Activated CD4-positive, alpha-beta memory T cell treated with anti-CD3 and anti-CD28 coated beads, Interleukin-2, amount 10 ng/mL, durations not matched to agents 7 days and 5 days (primary cell): ENCODE measurements at regions of chr5 and their contacts with region 1.

Region 1: GRCh38 chr5:119315516-119315949 is 40.3 kb upstream of the TNFAIP8 start:
- DNase-seq: peak; percentile 63
- H3K4me3 Mint-ChIP-seq: peak overlapping the region; percentile 21
- H3K27ac Mint-ChIP-seq: peak overlapping the region; percentile 77
- H3K4me1 Mint-ChIP-seq: peaks cover 94% of the 10 kb centered on the region
- H3K27me3 Mint-ChIP-seq: no peaks in the 10 kb centered on the region

Region 2: DNA sequence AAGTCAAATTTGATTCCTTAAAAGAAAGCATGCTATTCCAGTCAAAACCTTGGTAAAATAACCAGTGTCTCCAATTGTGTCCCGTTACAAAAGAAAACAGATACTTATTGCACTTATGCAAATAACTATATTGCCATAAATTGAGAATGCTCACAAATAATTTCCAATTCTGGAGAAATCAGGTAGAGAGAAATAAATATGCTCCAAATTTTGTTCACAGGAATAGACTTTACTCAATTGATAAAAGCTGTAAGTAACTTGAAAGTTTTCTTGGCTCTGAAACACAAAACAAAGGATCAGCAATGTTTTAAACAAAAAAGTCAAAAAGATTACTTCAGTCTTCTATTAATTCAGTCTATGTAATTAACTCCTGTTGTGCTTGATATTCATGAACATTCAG is 319.4 kb before region 1 on chr5:
- CTCF ChIA-PET with region 1: no interaction called
- POLR2A ChIA-PET with region 1: no interaction called
- DNase-seq: no peak
- H3K4me3 Mint-ChIP-seq: no peak overlapping the region
- H3K27ac Mint-ChIP-seq: no peak overlapping the region
- H3K4me1 Mint-ChIP-seq: no peaks in the 10 kb centered on the region
- H3K27me3 Mint-ChIP-seq: no peaks in the 10 kb centered on the region

Region 3: DNA sequence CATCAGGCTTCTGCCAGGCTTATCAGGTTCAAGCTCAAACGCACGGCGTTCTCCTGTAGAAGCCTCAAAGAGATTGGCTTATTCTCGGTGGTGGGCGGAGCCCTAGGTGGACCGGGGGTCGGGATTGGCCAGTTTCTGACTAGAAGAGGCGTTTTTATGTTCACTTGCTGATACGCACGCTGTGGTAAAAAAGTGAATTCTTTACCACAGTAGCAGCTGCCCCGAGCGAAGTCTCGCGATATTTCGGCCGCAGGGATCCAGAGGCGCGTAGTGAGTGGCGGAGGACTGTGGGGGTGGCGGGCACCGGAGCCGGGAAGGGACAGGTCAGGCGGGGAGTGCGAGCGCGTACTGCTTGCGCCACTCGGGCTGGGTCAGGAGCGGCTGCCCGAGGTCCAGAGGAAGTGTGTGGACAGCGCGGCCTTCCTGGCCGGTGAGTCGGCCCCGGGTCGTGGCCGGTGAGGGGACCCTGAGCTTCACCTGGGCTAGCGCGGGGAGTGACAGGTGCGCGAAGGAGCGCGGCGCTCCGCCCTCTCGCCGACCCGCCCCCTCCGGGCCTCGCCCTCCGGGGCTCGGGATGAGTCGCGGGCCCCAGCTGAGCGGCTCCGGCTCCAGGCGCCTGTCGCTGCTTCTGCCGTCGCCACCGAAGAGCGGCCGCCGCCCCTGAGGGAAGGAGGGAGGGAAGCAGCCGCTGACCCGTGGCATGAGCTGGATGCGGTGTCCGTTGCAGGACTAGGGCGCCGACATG is 244.5 kb before region 1 on chr5 and contains the start of gene DMXL1:
- CTCF ChIA-PET with region 1: interaction called, 16 read pairs
- POLR2A ChIA-PET with region 1: interaction called, 4 read pairs
- DNase-seq: peak; percentile 99
- H3K4me3 Mint-ChIP-seq: peak within 1 kb of the TSS; percentile 89
- H3K27ac Mint-ChIP-seq: peak within 1 kb of the TSS; percentile 96
- H3K4me1 Mint-ChIP-seq: peaks cover 41% of the 10 kb centered on the region
- H3K27me3 Mint-ChIP-seq: no peaks in the 10 kb centered on the region
- total RNA-seq, gene DMXL1: 31.5 to 33.0 TPM

Region 4: GRCh38 chr5:119302916-119303897 is 12.3 kb before region 1 on chr5:
- CTCF ChIA-PET with region 1: interaction called, 13 read pairs
- POLR2A ChIA-PET with region 1: interaction called, 36 read pairs
- DNase-seq: no peak
- H3K4me3 Mint-ChIP-seq: no peak overlapping the region
- H3K27ac Mint-ChIP-seq: peak overlapping the region; percentile 32
- H3K4me1 Mint-ChIP-seq: peaks cover 90% of the 10 kb centered on the region
- H3K27me3 Mint-ChIP-seq: no peaks in the 10 kb centered on the region

Region 5: DNA sequence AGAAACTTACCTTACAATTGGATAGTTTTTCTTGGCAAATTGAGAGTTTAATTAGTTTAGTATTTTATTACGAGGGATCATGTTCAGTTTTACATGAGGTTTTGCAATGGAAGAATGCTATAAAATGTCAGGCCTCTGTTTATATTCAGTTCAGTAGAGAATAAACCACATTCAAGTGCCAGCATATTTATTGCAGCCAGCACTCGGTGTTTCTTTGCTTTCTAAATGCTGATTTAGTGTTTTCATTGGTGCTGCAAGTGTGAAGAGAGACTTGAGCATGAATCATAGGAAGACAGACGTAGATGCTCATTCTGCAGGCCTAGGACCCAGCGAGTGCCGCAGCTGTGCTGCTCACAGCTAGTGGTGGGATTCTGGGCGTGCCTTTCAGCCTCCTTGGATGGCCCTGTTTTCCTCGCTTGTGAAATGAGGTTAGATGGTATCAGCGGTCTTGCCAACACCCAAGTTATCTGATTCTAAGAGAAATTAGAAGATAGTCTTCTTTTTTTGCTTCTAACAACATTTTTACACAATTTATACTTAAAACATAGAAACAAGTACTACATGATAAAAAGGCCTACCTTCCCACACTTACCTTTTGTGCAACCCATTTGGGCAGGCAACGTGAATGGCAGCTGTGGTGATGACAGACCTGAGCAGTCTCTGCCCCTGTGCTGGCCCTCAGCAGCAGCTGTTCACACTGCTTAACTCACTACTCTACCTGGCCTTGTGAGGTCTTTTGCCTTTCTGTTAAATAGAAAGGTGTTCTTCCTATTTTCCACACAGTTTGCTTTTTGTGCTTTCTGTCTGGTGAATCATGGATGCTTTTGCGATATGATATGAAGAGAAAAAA is 13.4 kb after region 1 on chr5:
- CTCF ChIA-PET with region 1: interaction called, 77 read pairs
- POLR2A ChIA-PET with region 1: interaction called, 196 read pairs
- DNase-seq: peak; percentile 73
- H3K4me3 Mint-ChIP-seq: peak overlapping the region; percentile 36
- H3K27ac Mint-ChIP-seq: peak overlapping the region; percentile 87
- H3K4me1 Mint-ChIP-seq: peaks cover 85% of the 10 kb centered on the region
- H3K27me3 Mint-ChIP-seq: no peaks in the 10 kb centered on the region

Region 6: GRCh38 chr5:119355685-119356611 is 40.4 kb after region 1 on chr5 and contains the start of gene TNFAIP8:
- CTCF ChIA-PET with region 1: interaction called, 26 read pairs
- POLR2A ChIA-PET with region 1: interaction called, 17 read pairs
- DNase-seq: peak; percentile 65
- H3K4me3 Mint-ChIP-seq: peak within 1 kb of the TSS; percentile 94
- H3K27ac Mint-ChIP-seq: peak within 1 kb of the TSS; percentile 88
- H3K4me1 Mint-ChIP-seq: peaks cover 89% of the 10 kb centered on the region
- H3K27me3 Mint-ChIP-seq: no peaks in the 10 kb centered on the region
- total RNA-seq, gene TNFAIP8: 161 to 163 TPM